Caco-2 (cell line): ENCODE measurements at regions of chr19 and their contacts with region 1.

Region 1: GRCh38 chr19:47225746-47226425 is 5.1 kb downstream of the BBC3 start:
- DNase-seq: peak; percentile 82 to 94
- H3K4me3 ChIP-seq: peak overlapping the region; percentile 61
- H3K4me3 Mint-ChIP-seq: no peak overlapping the region
- H3K27ac Mint-ChIP-seq: peak overlapping the region; percentile 81
- H3K4me1 ChIP-seq: peaks cover 32% of the 10 kb centered on the region
- H3K4me1 Mint-ChIP-seq: peaks cover 6% of the 10 kb centered on the region
- H3K27me3 ChIP-seq: no peaks in the 10 kb centered on the region
- H3K27me3 Mint-ChIP-seq: no peaks in the 10 kb centered on the region
- CTCF ChIP-seq: peak in 1 of 2 experiments; percentile 47

Region 2: GRCh38 chr19:47210689-47211316 is 15.1 kb before region 1 on chr19:
- CTCF ChIA-PET with region 1: interaction called, 20 read pairs
- POLR2A ChIA-PET with region 1: interaction called, 13 read pairs
- intact Hi-C with region 1: no loop called
- DNase-seq: peak; percentile 74 to 85
- H3K4me3 ChIP-seq: no peak overlapping the region
- H3K4me3 Mint-ChIP-seq: peak overlapping the region; percentile 42
- H3K27ac Mint-ChIP-seq: peak overlapping the region; percentile 94
- H3K4me1 ChIP-seq: no peaks in the 10 kb centered on the region
- H3K4me1 Mint-ChIP-seq: peaks cover 13% of the 10 kb centered on the region
- H3K27me3 ChIP-seq: no peaks in the 10 kb centered on the region
- H3K27me3 Mint-ChIP-seq: no peaks in the 10 kb centered on the region
- CTCF ChIP-seq: peak; percentile 83 to 85

Region 3: GRCh38 chr19:47296036-47296435 is 70.2 kb after region 1 on chr19:
- CTCF ChIA-PET with region 1: no interaction called
- POLR2A ChIA-PET with region 1: no interaction called
- intact Hi-C with region 1: no loop called
- DNase-seq: peak; percentile 89 to 92
- H3K4me3 ChIP-seq: no peak overlapping the region
- H3K4me3 Mint-ChIP-seq: no peak overlapping the region
- H3K27ac Mint-ChIP-seq: peak overlapping the region; percentile 64
- H3K4me1 ChIP-seq: no peaks in the 10 kb centered on the region
- H3K4me1 Mint-ChIP-seq: peaks cover 7% of the 10 kb centered on the region
- H3K27me3 ChIP-seq: no peaks in the 10 kb centered on the region
- H3K27me3 Mint-ChIP-seq: no peaks in the 10 kb centered on the region
- CTCF ChIP-seq: peak; percentile 78 to 89

Region 4: DNA sequence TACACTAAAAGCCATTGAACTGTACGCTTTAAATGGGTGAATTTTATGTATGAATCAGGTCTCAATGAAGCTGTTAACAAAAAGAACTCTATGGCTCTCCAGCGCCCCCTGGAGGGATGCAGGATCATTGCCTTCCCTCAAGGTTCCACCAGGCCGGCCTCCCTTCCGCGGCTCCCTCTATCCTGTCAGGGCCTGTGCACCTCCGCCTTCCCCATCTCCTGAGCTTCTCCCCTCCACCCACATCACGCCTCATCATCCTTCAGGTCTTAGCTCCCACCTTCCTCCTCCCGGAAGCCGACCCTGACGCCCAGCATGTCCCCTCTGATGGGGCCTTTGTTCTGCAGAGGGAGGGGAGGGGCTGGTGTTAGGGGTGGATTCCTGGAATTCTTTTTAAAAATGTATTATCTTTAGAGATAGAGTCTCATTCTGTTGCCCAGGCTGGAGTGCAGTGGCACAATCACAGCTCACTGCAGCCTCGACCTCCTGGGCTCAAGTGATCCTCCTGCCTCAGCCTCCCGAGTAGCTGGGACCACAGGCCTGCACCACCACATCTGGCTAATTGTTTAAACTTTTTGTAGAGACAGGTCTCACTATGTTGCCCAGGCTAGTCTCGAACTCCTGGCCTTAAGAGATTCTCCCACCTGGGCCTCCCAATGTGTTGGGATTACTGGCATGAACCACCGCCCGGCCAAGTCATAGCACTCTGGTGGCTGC is 165.8 kb after region 1 on chr19:
- CTCF ChIA-PET with region 1: no interaction called
- POLR2A ChIA-PET with region 1: no interaction called
- intact Hi-C with region 1: no loop called
- DNase-seq: peak; percentile 71 to 84
- H3K4me3 ChIP-seq: no peak overlapping the region
- H3K4me3 Mint-ChIP-seq: peak overlapping the region; percentile 34
- H3K27ac Mint-ChIP-seq: no peak overlapping the region
- H3K4me1 ChIP-seq: no peaks in the 10 kb centered on the region
- H3K4me1 Mint-ChIP-seq: no peaks in the 10 kb centered on the region
- H3K27me3 ChIP-seq: no peaks in the 10 kb centered on the region
- H3K27me3 Mint-ChIP-seq: peaks cover 6% of the 10 kb centered on the region
- CTCF ChIP-seq: peak; percentile 89 to 92